H1 (cell line): ENCODE measurements at regions of chr22 and their contacts with region 1.

Region 1: DNA sequence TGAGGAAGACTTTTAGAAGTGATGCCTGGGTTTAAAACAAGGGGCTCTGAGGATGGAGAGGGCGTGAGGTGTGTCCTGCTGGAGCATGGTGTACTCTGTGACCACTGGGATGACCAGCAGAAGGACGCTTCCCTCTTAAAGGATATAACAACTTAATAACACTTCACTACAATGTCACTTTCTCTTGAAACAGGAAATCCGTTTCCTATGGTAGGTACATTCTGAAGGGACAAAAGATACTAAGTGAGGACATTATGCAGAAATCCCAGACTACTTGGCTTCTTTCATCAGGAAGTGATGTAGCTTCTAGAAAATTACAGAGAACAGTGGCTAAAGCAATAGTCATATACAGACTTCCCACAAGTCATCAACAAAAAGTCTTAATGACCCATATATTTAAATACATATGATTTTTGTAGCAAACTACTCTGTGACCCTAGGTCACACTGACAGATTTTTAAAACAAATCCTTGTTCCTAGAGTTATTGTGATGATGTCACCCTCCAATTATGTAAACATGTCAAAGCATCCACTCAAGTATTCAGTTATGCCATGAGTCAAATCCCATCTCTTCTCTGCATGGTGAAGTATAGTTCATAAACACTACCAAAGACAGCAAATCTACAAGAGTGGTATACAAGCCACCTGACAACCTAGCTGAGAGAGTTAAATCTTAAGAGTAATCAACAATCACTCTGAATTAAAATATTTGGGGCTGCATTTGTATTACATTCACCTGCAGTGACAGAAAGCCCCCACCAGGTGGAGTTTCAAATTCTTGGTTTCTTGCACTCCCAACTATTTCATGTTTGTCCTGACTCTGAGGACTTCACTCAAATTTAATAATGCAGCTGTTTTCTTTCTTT is 32.8 kb downstream of the PITPNB start:
- DNase-seq: peak in 1 of 2 experiments; percentile 57
- H3K4me3 ChIP-seq: no peak overlapping the region
- H3K27ac ChIP-seq: no peak overlapping the region
- H3K4me1 ChIP-seq: peaks cover 3 to 12% (median 8%) of the 10 kb centered on the region in 4 experiments
- H3K27me3 ChIP-seq: no peaks in the 10 kb centered on the region
- CTCF ChIP-seq: peak in 2 of 3 experiments; percentile 58 to 59; a peak in 3 of 4 replicates
- EP300 ChIP-seq: no peak
- POLR2A ChIP-seq: no peak
- RAD21 ChIP-seq: peak; percentile 41 to 56

Region 2: DNA sequence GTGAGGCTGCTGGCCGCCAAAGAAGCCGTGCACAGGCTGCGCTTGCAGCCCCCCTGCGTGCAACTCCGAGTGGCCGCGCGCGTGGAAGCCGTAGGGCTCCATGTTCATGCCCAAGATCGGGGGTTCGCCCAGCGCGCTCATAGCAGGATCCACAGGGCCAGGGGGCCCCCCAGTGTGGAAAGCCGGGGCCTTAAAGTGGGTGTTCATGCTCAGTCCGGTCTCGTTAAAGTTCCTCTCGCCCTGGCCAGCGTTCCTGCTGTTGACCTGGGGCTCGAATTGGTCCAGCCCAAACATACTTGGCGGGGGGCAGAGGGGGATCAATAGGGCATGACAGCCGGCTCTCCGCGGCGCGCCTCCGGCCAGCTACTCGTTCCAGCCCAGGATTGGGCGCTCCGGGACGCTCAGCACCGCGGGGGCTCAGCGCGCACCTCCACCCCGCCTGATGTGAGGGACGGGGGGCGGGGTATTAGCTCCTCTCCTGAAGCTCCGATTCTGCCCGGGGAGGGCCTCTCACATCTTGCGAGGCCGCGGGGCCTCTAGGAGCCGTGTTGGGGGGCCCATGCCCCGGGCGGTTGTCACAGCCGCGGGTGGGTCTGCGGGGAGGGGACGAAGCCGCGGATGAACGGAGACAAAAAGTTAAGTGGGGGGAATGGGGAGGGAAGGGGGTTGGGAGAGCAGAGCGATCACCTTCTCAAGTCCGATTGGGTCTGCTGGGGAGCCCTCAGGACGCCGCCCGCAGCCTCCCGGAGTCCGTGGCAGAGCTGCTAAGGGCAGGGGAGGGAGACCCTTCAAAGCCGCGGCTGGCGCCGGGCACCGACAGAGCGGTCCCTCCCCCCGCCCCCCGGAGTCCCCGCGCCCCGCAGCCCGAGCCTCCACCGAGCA is 85.7 kb before region 1 on chr22:
- CTCF ChIA-PET with region 1: no interaction called
- POLR2A ChIA-PET with region 1: no interaction called
- DNase-seq: no peak
- H3K4me3 ChIP-seq: peak overlapping the region; percentile 38 to 69 (median 48)
- H3K27ac ChIP-seq: no peak overlapping the region
- H3K4me1 ChIP-seq: peaks cover 2 to 48% (median 39%) of the 10 kb centered on the region in 4 experiments
- H3K27me3 ChIP-seq: peaks cover 60 to 81% (median 77%) of the 10 kb centered on the region in 4 experiments
- CTCF ChIP-seq: no peak
- EP300 ChIP-seq: no peak
- POLR2A ChIP-seq: no peak
- RAD21 ChIP-seq: no peak

Region 3: DNA sequence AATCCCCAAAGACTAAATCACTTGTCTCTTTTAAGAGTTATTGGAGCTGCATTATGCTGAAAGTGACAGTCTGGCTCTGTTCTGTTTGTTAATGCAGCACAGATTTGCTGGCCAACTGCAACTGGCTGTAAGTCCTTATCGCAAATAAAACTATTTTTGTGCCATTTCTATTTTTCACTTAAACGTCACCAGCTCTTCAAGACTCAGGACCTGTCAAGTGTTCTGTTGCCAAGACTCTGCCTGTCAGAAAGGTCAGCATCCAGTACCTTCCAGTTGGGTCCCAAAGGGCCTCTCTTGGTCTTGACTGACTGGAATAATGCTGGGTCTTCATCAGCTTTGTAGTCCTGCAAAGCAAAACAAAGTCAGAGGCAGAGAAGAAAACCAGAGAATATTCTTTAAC is 12.7 kb before region 1 on chr22:
- CTCF ChIA-PET with region 1: interaction called, 14 read pairs
- POLR2A ChIA-PET with region 1: no interaction called
- DNase-seq: no peak
- H3K4me3 ChIP-seq: no peak overlapping the region
- H3K27ac ChIP-seq: no peak overlapping the region
- H3K4me1 ChIP-seq: peaks cover 0 to 2% (median 0%) of the 10 kb centered on the region in 4 experiments; a peak in 1 of 7 replicates
- H3K27me3 ChIP-seq: no peaks in the 10 kb centered on the region
- CTCF ChIP-seq: no peak
- EP300 ChIP-seq: no peak
- POLR2A ChIP-seq: no peak
- RAD21 ChIP-seq: no peak

Region 4: DNA sequence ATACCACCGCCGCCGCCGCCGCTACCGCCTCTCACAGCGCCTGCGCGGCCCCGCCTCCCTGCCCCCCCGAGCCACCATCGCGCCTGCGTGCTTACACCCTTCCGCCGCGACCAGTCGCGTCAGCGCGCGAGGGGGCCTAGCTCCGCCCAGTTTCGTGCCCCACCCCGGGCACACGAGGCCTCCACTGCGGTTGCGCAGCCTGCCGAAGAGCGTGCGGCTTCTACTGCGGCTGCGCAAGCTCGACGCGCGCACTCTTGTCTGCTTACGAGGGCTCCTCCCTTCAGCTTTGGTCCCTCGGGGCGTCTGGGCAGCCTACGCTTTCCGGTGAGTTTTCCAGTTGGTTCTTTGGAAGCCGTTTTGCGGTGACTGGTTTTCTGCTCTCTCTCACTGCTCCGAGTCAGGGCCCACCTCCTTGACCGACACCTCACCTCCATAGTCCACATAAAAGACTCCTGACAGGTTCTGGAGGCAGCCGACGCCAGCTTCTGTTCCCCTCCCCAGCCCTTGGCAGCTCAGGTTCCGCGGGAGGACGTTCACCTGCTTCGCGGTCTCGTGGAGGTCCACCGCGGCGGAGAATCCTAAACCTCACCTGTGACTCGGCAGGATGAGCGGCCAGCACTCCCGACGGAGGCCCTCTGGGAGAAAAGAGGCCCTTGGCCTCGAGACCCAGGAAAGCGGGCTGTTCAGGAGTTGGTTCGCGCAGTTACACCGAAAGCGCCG is 33.2 kb after region 1 on chr22 and contains the start of gene PITPNB:
- CTCF ChIA-PET with region 1: interaction called, 15 read pairs
- POLR2A ChIA-PET with region 1: no interaction called
- DNase-seq: peak; percentile 98 to 100
- H3K4me3 ChIP-seq: peak within 1 kb of the TSS; percentile 78 to 94 (median 84)
- H3K27ac ChIP-seq: peak within 1 kb of the TSS; percentile 57
- H3K4me1 ChIP-seq: peaks cover 2 to 3% (median 3%) of the 10 kb centered on the region in 4 experiments; a peak in 6 of 7 replicates
- H3K27me3 ChIP-seq: no peaks in the 10 kb centered on the region
- CTCF ChIP-seq: no peak
- EP300 ChIP-seq: no peak
- POLR2A ChIP-seq: peak; percentile 27 to 61; a peak in 2 of 3 replicates
- RAD21 ChIP-seq: no peak
- total RNA-seq, gene PITPNB: 83.0 and 89.3 TPM in 2 replicates

Region 5: DNA sequence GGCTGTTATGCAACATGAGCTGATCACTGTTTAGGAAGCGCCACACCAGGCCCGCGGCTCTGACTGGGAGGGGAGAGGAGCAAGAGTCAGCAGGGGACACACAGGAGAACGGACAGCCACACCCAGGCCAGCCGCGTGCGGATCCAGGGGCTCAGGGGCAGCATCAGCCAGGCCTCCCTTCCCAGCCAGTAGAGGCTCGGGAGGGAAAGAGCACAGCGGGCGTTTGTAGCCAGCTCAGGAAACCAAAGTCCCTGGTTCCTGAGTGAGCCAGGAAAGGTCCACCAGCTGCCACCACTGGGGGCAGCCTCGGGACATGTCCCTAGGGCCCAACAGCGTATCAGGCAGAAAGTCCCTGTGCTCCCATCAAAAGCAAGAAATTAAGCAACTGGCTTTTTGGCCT is 104.7 kb after region 1 on chr22:
- CTCF ChIA-PET with region 1: interaction called, 38 read pairs
- POLR2A ChIA-PET with region 1: no interaction called
- DNase-seq: peak; percentile 61 to 83
- H3K4me3 ChIP-seq: no peak overlapping the region
- H3K27ac ChIP-seq: no peak overlapping the region
- H3K4me1 ChIP-seq: peaks cover 0 to 22% (median 18%) of the 10 kb centered on the region in 4 experiments; a peak in 6 of 7 replicates
- H3K27me3 ChIP-seq: peaks cover 0 to 2% (median 0%) of the 10 kb centered on the region in 4 experiments; a peak in 2 of 7 replicates
- CTCF ChIP-seq: peak; percentile 77 to 88 (median 87)
- EP300 ChIP-seq: 0 out of 3 replicates have a peak, but pooled peaks of 1 of the 2 experiments have one; percentile 51
- POLR2A ChIP-seq: no peak
- RAD21 ChIP-seq: peak; percentile 59 to 68

Region 6: GRCh38 chr22:28009272-28009827 is 123.1 kb after region 1 on chr22:
- CTCF ChIA-PET with region 1: interaction called, 84 read pairs
- POLR2A ChIA-PET with region 1: interaction called, 3 read pairs
- DNase-seq: peak; percentile 67 to 89
- H3K4me3 ChIP-seq: no peak overlapping the region
- H3K27ac ChIP-seq: no peak overlapping the region
- H3K4me1 ChIP-seq: no peaks in the 10 kb centered on the region; a peak in 1 of 7 replicates
- H3K27me3 ChIP-seq: no peaks in the 10 kb centered on the region
- CTCF ChIP-seq: peak; percentile 96 to 98 (median 97)
- EP300 ChIP-seq: no peak
- POLR2A ChIP-seq: no peak
- RAD21 ChIP-seq: peak; percentile 99

Region 7: DNA sequence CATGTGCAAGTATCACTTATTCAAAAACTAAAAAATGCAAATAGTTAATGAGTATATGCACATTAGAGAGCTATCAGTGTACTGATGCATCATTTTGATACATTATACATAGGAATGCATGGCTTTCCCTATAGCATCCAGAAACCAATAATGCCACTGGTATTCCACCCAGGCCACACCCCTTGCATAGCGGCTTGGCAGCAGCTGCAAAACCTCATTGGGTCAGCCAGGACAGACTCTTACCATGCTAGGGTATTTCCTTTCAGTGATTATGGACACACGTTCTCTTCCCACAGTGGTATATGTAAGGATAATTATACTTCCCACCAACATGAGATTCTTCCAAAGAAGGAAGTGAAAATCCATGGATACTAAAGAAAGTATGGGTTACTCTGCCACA is 178.7 kb after region 1 on chr22:
- CTCF ChIA-PET with region 1: no interaction called
- POLR2A ChIA-PET with region 1: no interaction called
- DNase-seq: no peak
- H3K4me3 ChIP-seq: no peak overlapping the region
- H3K27ac ChIP-seq: no peak overlapping the region
- H3K4me1 ChIP-seq: no peaks in the 10 kb centered on the region
- H3K27me3 ChIP-seq: no peaks in the 10 kb centered on the region
- CTCF ChIP-seq: no peak
- EP300 ChIP-seq: no peak
- POLR2A ChIP-seq: no peak
- RAD21 ChIP-seq: no peak

Region 8: DNA sequence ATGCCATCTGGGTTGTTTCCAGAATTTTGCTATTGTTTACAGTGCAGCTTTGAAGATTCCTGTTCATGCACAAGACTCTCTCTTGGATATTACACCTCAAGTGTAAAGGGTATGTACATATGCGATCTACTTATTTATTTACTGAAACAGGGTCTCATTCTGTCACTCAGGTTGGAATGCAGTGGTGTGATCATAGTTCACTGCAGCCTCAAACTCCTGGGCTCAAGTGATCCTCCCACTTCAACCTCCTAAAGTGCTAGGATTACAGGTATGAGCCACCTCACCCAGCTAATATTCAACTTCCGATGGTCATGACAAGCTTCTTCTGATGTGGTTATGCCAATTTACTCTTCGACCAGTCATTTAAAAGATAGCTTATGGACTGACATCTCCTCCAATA is 191.0 kb after region 1 on chr22:
- CTCF ChIA-PET with region 1: no interaction called
- POLR2A ChIA-PET with region 1: no interaction called
- DNase-seq: no peak
- H3K4me3 ChIP-seq: no peak overlapping the region
- H3K27ac ChIP-seq: no peak overlapping the region
- H3K4me1 ChIP-seq: no peaks in the 10 kb centered on the region
- H3K27me3 ChIP-seq: no peaks in the 10 kb centered on the region
- CTCF ChIP-seq: no peak
- EP300 ChIP-seq: no peak
- POLR2A ChIP-seq: no peak
- RAD21 ChIP-seq: no peak